B cell (primary cell): ENCODE measurements at regions of chr15 and their contacts with region 1.

Region 1: DNA sequence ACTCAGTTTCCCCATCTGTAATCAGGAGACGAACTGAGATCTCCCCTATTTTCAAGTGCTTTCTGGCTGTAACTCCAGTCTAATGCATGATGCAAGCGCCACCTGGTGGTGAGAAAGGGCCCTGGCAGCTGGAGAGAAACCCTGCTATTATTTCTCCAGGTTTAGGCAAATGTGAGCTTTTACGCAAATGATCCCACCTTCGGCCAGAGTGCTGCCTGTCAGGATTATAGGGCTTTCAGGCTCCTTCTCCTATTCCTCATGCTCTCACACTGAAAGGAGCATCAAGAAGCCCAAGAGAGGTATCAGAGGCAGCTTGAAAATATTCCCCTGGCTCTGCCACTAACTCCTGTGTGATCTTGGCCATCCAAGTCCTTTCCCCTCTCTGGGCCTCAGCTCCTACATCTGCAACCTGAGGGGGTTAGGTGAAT is 93.9 kb upstream of the RASGRF1 start:
- DNase-seq: peak; percentile 77
- ATAC-seq: no peak
- H3K4me3 ChIP-seq: no peak overlapping the region
- H3K4me3 Mint-ChIP-seq: no peak overlapping the region
- H3K27ac ChIP-seq: no peak overlapping the region
- H3K27ac Mint-ChIP-seq: no peak overlapping the region
- H3K4me1 ChIP-seq: peaks cover 0 to 3% of the 10 kb centered on the region in 2 donors
- H3K4me1 Mint-ChIP-seq: no peaks in the 10 kb centered on the region
- H3K27me3 ChIP-seq: peaks cover 0 to 5% (median 0%) of the 10 kb centered on the region in 4 experiments
- H3K27me3 Mint-ChIP-seq: peaks cover 12% of the 10 kb centered on the region
- CTCF ChIP-seq: peak; percentile 98

Region 2: GRCh38 chr15:78750566-78750965 is 433.9 kb before region 1 on chr15:
- CTCF ChIA-PET with region 1: no interaction called
- POLR2A ChIA-PET with region 1: no interaction called
- intact Hi-C with region 1: loop called (anchors 10 kb)
- DNase-seq: no peak
- ATAC-seq: no peak
- H3K4me3 ChIP-seq: no peak overlapping the region
- H3K4me3 Mint-ChIP-seq: peak overlapping the region; percentile 32
- H3K27ac ChIP-seq: no peak overlapping the region
- H3K27ac Mint-ChIP-seq: no peak overlapping the region
- H3K4me1 ChIP-seq: peaks cover 0 to 11% of the 10 kb centered on the region in 2 donors
- H3K4me1 Mint-ChIP-seq: peaks cover 5% of the 10 kb centered on the region
- H3K27me3 ChIP-seq: no peaks in the 10 kb centered on the region
- H3K27me3 Mint-ChIP-seq: no peaks in the 10 kb centered on the region
- CTCF ChIP-seq: no peak

Region 3: GRCh38 chr15:78872972-78873792 is 311.3 kb before region 1 on chr15:
- CTCF ChIA-PET with region 1: interaction called, 12 read pairs
- POLR2A ChIA-PET with region 1: no interaction called
- intact Hi-C with region 1: no loop called
- DNase-seq: peak; percentile 94
- ATAC-seq: peak; percentile 73
- H3K4me3 ChIP-seq: peak overlapping the region; percentile 82 to 100 (median 100)
- H3K4me3 Mint-ChIP-seq: peak overlapping the region; percentile 97
- H3K27ac ChIP-seq: peak overlapping the region; percentile 95 to 100
- H3K27ac Mint-ChIP-seq: peak overlapping the region; percentile 100
- H3K4me1 ChIP-seq: peaks cover 29 to 47% of the 10 kb centered on the region in 2 donors
- H3K4me1 Mint-ChIP-seq: peaks cover 44% of the 10 kb centered on the region
- H3K27me3 ChIP-seq: no peaks in the 10 kb centered on the region
- H3K27me3 Mint-ChIP-seq: no peaks in the 10 kb centered on the region
- CTCF ChIP-seq: peak; percentile 46

Region 4: DNA sequence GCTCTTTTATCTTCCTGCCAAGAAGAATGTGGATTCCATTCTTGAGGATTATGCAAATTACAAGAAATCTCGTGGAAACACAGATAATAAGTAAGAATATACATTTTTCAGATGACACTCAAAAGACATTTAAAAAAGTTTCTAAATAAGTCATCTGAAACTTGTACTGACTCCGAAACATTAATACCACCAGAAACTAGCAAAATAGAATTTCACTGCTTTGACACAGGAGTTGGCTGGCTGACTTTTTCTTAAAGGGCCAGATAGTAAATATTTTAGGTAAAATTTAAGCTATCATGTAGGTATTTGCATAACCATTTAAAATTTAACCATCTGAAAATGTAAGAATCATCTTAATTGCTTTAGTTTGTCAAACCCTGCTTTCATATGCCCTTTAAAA is 290.9 kb before region 1 on chr15:
- CTCF ChIA-PET with region 1: interaction called, 14 read pairs
- POLR2A ChIA-PET with region 1: no interaction called
- intact Hi-C with region 1: no loop called
- DNase-seq: no peak
- ATAC-seq: no peak
- H3K4me3 ChIP-seq: no peak overlapping the region
- H3K4me3 Mint-ChIP-seq: no peak overlapping the region
- H3K27ac ChIP-seq: no peak overlapping the region
- H3K27ac Mint-ChIP-seq: no peak overlapping the region
- H3K4me1 ChIP-seq: no peaks in the 10 kb centered on the region
- H3K4me1 Mint-ChIP-seq: no peaks in the 10 kb centered on the region
- H3K27me3 ChIP-seq: no peaks in the 10 kb centered on the region
- H3K27me3 Mint-ChIP-seq: no peaks in the 10 kb centered on the region
- CTCF ChIP-seq: no peak

Region 5: DNA sequence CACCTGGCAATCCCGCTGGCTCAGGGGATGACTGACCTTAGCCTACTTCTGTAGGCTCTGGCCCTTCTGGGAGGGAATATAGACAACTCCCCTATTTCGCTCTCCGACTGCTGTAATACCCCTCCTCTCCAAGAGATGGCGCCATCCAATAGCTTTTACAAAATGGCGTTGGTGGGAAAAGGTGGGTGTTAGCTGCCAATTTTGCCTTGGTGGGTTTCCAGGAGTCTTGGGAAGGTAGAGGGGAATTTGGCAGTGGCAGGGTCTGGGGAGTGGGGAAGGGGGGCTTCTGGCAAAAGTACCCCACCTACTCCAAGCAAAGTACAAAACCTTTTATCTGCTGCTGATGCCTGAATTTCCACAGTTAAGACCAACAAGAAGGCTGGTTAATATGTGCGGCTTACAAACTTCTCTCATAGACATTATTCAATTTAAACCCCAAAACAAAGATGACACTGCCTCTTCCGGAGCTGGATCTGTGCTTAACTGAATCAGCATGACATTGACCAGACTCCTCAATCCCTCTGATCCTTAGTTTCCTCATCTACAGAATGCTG is 156.0 kb before region 1 on chr15:
- CTCF ChIA-PET with region 1: interaction called, 397 read pairs
- POLR2A ChIA-PET with region 1: no interaction called
- intact Hi-C with region 1: no loop called
- DNase-seq: peak; percentile 62
- ATAC-seq: peak; percentile 42
- H3K4me3 ChIP-seq: no peak overlapping the region
- H3K4me3 Mint-ChIP-seq: no peak overlapping the region
- H3K27ac ChIP-seq: no peak overlapping the region
- H3K27ac Mint-ChIP-seq: no peak overlapping the region
- H3K4me1 ChIP-seq: peaks cover 5 to 9% of the 10 kb centered on the region in 2 donors
- H3K4me1 Mint-ChIP-seq: peaks cover 9% of the 10 kb centered on the region
- H3K27me3 ChIP-seq: no peaks in the 10 kb centered on the region
- H3K27me3 Mint-ChIP-seq: no peaks in the 10 kb centered on the region
- CTCF ChIP-seq: peak; percentile 83

Region 6: DNA sequence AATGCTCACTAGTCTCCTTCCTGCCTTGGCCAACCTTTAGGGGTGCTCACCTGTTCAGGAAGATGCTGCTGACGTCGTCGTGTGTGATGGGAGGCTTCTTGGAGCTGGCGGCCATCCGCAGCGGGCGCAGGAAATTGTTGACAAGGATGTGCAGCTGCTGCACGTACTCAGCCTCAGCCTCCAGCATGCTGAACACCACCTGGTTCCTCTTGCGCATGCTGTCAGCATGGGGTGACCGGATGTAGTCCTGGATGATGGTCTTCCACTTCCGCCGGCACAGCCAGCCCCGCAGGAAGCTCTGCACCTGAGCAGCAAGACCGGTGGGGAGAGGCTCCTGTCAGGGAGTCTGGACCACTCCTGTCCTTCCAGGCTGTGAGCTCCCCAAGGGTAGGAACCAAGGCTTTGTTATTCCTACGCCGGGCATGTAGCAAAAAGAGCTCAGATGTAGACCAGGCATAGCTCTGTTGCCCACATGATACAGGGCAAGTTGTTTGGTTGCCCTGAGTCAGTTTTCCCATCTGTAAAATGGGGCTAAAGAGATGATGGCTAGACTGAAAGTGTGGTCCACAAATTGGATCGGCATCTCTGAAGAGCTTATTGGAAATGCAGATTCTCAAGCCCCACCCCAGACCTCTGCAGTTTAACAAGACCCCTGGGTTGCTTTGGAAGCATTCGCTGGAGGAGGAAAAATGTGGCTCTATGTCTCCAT is 137.6 kb before region 1 on chr15:
- CTCF ChIA-PET with region 1: interaction called, 15 read pairs
- POLR2A ChIA-PET with region 1: interaction called, 5 read pairs
- intact Hi-C with region 1: no loop called
- DNase-seq: no peak
- ATAC-seq: no peak
- H3K4me3 ChIP-seq: no peak overlapping the region
- H3K4me3 Mint-ChIP-seq: no peak overlapping the region
- H3K27ac ChIP-seq: no peak overlapping the region
- H3K27ac Mint-ChIP-seq: no peak overlapping the region
- H3K4me1 ChIP-seq: no peaks in the 10 kb centered on the region
- H3K4me1 Mint-ChIP-seq: no peaks in the 10 kb centered on the region
- H3K27me3 ChIP-seq: peaks cover 0 to 8% (median 0%) of the 10 kb centered on the region in 4 experiments
- H3K27me3 Mint-ChIP-seq: peaks cover 13% of the 10 kb centered on the region
- CTCF ChIP-seq: no peak

Region 7: GRCh38 chr15:79172032-79172481 is 12.4 kb before region 1 on chr15:
- CTCF ChIA-PET with region 1: interaction called, 25 read pairs
- POLR2A ChIA-PET with region 1: no interaction called
- intact Hi-C with region 1: no loop called
- DNase-seq: no peak
- ATAC-seq: no peak
- H3K4me3 ChIP-seq: no peak overlapping the region
- H3K4me3 Mint-ChIP-seq: no peak overlapping the region
- H3K27ac ChIP-seq: no peak overlapping the region
- H3K27ac Mint-ChIP-seq: no peak overlapping the region
- H3K4me1 ChIP-seq: no peaks in the 10 kb centered on the region
- H3K4me1 Mint-ChIP-seq: no peaks in the 10 kb centered on the region
- H3K27me3 ChIP-seq: peaks cover 0 to 25% (median 9%) of the 10 kb centered on the region in 4 experiments
- H3K27me3 Mint-ChIP-seq: peaks cover 63% of the 10 kb centered on the region
- CTCF ChIP-seq: no peak